ENCODE measurements at regions of chr21 and their contacts with region 1.

Region 1: DNA sequence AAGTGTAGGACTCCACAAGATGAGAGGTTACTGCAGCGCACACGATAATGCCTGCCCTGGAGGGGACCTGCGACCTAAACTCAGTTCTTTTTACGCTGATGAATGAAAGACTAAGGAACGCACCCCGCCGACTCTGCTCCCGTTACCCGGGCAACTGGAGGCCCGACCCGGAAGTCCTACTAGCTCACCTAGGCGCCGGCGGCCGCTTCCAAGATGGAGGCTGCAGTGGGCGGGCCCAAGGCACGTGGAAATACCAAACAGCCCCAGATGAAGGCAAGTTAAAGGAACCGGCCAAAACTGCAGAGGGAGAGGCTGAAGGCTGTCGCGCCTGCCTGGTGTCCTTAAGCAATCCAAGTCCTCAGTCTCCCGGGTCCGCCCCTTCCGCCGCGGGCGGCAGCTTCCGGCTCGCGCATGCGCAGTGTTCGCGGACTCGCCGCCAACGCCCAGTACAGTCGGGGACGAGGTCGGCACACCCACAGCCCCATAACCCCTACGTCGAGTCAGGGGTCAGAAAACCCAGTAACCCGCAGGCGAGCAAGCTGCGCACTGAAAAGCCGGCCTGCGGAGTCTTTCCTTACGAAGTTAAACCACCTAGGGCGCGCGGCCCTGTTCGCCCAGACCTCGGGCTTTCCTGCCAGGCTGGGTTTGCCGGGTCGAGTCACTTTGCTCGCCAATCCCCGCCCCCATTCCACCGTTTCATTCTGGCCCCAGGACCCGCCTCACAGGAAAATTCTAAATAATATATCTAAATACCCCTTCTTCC is at the start of gene SETD4:
- DNase-seq: peak; percentile 93
- H3K4me3 Mint-ChIP-seq: peak within 1 kb of the TSS; percentile 90
- H3K27ac Mint-ChIP-seq: peak within 1 kb of the TSS; percentile 90
- H3K4me1 Mint-ChIP-seq: peaks cover 6% of the 10 kb centered on the region
- H3K27me3 Mint-ChIP-seq: no peaks in the 10 kb centered on the region
- CTCF ChIP-seq: no peak
- total RNA-seq, gene SETD4: 22.6 and 23.3 TPM in 2 replicates

Region 2: DNA sequence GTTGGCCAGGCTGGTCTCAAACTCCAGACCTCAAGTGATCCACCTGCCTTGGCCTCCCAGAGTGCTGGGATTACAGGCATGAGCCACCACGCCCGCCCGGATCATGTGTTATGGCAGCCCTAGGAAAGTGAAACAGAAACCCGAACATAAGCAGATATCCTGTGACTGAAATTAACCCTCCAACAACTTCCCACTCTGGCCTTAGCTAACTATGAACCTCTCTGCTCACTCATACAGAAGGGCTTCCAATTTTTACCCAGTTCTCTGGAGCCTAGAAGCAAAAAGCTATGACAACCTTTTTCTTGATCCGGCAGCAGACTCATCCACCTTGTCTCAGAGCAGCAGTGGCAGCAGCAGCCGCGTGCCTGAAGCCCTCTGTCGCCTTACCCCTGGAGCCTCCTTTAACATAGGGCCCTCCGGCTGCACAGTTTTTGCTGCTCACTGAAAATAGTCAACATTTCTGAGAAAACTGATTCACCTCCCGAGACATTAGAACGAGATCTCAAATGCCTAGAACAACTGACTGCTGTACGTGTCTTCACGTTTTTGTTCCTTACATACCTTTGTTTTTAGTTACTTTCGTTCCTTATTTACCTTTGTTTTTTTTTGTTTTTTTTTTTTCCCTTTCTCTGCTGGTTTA is 18.8 kb after region 1 on chr21:
- CTCF ChIA-PET with region 1: interaction called, 5 read pairs
- POLR2A ChIA-PET with region 1: interaction called, 23 read pairs
- intact Hi-C with region 1: no loop called
- DNase-seq: no peak
- H3K4me3 Mint-ChIP-seq: no peak overlapping the region
- H3K27ac Mint-ChIP-seq: no peak overlapping the region
- H3K4me1 Mint-ChIP-seq: peaks cover 6% of the 10 kb centered on the region
- H3K27me3 Mint-ChIP-seq: no peaks in the 10 kb centered on the region
- CTCF ChIP-seq: no peak

Region 3: DNA sequence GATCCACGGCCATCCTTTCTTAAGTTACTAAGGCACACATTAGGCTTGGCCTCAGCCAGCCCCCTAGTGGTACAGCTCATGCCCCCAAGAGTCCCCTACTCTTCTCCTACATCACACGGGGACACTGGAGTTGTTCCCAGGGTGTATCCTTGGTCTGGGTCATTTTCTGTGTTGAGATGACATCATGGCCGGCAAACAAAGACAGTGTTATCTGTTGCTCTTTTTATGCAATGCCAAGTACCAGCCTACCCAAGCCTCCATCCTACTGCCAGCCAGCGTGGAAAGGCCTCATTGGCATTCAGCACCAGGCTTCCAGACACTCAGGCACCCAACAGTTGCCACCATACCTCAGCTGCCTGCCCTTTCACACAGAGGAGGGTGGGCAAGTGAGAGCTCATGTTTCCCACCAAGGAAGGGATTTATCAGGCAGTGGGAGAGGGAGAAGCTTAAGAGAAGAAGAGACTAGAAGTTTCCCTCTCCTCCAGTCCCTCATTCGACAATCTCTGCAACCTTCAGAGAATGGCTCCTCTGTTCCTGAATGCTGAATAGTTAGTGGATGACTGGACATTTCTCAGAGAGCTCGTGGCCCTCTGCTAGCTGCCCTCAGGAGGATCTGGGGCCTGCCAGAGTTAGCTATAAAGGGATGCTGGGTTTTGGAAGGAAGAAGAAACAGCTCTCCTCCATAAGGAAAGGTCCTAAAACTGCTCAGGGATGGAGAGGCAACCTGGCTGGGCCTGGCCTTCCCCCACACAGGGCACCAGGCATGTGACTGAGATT is 27.2 kb after region 1 on chr21:
- CTCF ChIA-PET with region 1: no interaction called
- POLR2A ChIA-PET with region 1: interaction called, 23 read pairs
- intact Hi-C with region 1: no loop called
- DNase-seq: no peak
- H3K4me3 Mint-ChIP-seq: no peak overlapping the region
- H3K27ac Mint-ChIP-seq: no peak overlapping the region
- H3K4me1 Mint-ChIP-seq: no peaks in the 10 kb centered on the region
- H3K27me3 Mint-ChIP-seq: no peaks in the 10 kb centered on the region
- CTCF ChIP-seq: no peak

Region 4: GRCh38 chr21:36097266-36098230 is 37.2 kb after region 1 on chr21:
- CTCF ChIA-PET with region 1: interaction called, 5 read pairs
- POLR2A ChIA-PET with region 1: interaction called, 12 read pairs
- intact Hi-C with region 1: no loop called
- DNase-seq: peak; percentile 10
- H3K4me3 Mint-ChIP-seq: no peak overlapping the region
- H3K27ac Mint-ChIP-seq: no peak overlapping the region
- H3K4me1 Mint-ChIP-seq: peaks cover 12% of the 10 kb centered on the region
- H3K27me3 Mint-ChIP-seq: no peaks in the 10 kb centered on the region
- CTCF ChIP-seq: no peak

Region 5: DNA sequence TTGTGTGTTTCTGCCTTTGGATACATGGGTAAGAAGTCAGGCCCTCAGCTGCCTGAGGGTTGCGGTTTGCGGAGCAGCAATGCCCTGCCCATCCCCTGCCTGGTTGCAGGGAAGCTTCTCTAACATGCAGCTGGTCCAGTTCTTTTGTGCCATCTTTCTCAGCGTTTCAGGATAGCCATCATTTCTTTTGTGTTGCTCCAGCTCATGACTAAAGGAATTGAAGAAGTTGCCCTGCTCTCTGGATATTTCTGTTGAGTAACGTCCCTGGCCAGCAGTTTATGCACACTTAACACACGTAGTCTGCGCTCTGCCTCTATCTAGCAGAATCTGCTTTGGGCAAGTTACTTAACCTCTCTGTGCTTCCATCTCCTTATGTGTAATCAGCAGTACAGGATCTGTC is 158.4 kb after region 1 on chr21:
- CTCF ChIA-PET with region 1: no interaction called
- POLR2A ChIA-PET with region 1: no interaction called
- intact Hi-C with region 1: no loop called
- DNase-seq: no peak
- H3K4me3 Mint-ChIP-seq: no peak overlapping the region
- H3K27ac Mint-ChIP-seq: no peak overlapping the region
- H3K4me1 Mint-ChIP-seq: no peaks in the 10 kb centered on the region
- H3K27me3 Mint-ChIP-seq: no peaks in the 10 kb centered on the region
- CTCF ChIP-seq: no peak

Measured in MCF 10A (cell line).